ENCODE measurements at regions of chr12 and their contacts with region 1.

Region 1: DNA sequence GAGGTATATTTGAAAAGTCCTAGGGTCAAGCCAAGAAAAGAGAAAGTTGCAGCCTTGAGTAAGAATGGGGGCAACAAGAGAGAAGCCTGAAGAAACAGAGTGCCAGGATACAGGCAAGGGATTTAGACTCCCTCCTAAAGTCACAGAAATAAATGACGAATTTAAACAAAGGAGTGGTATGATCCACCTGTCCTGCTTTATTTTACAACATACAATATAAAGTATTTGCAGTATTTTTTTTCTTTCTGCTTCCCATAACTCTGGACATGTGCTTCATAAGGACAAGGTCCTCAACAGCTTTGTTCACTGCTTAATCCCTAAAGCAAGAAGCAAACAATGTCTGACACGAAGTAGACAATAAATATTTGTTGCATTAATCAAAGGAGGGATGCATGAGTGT is 57.4 kb downstream of the IFNG start:
- DNase-seq: peak in 1 of 2 experiments; percentile 16
- H3K4me3 ChIP-seq: no peak overlapping the region
- H3K4me3 Mint-ChIP-seq: no peak overlapping the region
- H3K27ac Mint-ChIP-seq: peak overlapping the region; percentile 45
- H3K4me1 ChIP-seq: peaks cover 11% of the 10 kb centered on the region
- H3K4me1 Mint-ChIP-seq: peaks cover 11% of the 10 kb centered on the region
- H3K27me3 ChIP-seq: no peaks in the 10 kb centered on the region
- H3K27me3 Mint-ChIP-seq: no peaks in the 10 kb centered on the region
- CTCF ChIP-seq: no peak

Region 2: DNA sequence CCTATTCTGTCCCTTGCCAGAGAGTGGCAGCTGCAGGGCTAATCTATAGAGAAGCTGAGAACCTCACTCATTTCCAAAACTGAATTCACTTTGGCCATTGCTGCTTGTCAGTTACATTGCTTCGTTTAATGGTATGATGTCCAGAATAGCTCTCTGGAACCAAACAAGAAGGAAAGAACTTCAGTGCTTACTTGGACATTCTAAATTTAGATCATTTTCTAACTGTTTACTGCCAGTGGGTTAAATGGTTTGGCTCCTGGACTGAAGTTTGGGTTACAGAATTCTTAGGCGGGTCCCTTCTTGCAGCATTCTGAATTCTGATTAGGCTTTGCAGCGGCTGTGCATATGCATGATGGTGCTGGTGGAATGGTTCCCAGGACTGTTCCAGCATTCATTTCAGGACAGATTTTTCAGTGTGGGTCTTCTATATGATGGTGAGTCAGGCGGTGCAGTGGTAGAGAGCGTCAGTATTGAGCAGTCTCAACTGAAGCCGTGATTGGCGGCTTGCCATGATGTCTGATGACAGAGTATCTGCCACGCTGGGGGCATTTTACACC is 304.9 kb before region 1 on chr12:
- CTCF ChIA-PET with region 1: no interaction called
- POLR2A ChIA-PET with region 1: no interaction called
- intact Hi-C with region 1: no loop called
- DNase-seq: no peak
- H3K4me3 ChIP-seq: no peak overlapping the region
- H3K4me3 Mint-ChIP-seq: no peak overlapping the region
- H3K27ac Mint-ChIP-seq: no peak overlapping the region
- H3K4me1 ChIP-seq: no peaks in the 10 kb centered on the region
- H3K4me1 Mint-ChIP-seq: peaks cover 5% of the 10 kb centered on the region
- H3K27me3 ChIP-seq: no peaks in the 10 kb centered on the region
- H3K27me3 Mint-ChIP-seq: no peaks in the 10 kb centered on the region
- CTCF ChIP-seq: no peak

Region 3: DNA sequence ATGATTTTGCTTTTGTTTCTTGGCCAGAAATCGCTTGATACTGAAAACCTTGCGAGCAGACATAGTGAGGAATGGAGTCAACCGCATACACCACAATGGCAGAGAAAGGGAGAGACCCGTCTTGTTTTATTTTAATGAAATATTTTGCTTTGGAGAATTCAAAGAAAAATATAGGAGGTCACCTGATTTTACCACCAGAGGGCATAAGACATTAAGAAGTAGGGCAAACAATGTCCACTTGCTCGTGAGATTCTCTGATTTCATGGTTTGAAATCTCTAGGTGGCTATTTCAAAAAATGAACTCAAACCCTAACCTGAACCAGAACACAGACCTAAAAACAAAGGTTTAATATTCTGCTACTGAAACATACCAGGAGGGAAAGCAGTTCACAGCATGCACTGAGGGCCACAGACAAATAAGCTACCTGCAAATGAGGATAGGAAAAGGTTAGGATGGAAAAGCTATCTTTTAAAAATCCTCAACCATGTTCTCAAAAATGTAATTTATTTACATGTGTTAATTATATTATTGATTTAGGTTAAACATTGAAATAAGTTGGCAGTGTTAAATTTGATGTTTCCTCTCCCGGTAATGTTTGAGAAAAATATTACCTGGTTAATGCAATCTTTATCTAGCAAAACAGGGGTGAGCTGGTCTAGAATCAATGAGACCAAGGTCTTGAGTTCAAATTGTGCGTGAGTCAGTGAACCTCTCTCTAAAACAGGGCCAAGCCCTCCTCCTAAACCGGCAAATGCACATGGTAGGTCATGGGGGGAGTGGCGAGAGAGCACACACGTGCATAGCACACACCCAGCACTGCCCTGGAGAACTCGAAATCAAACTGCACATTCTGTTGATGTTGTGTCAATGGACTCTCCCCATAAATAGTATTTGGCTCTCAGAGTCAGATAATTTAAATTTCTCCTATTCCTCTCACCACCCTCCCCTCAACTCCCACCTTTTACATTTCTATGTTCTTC is 100.4 kb before region 1 on chr12:
- CTCF ChIA-PET with region 1: no interaction called
- POLR2A ChIA-PET with region 1: no interaction called
- intact Hi-C with region 1: no loop called
- DNase-seq: peak in 1 of 2 experiments; percentile 7
- H3K4me3 ChIP-seq: no peak overlapping the region
- H3K4me3 Mint-ChIP-seq: no peak overlapping the region
- H3K27ac Mint-ChIP-seq: no peak overlapping the region
- H3K4me1 ChIP-seq: no peaks in the 10 kb centered on the region
- H3K4me1 Mint-ChIP-seq: no peaks in the 10 kb centered on the region
- H3K27me3 ChIP-seq: no peaks in the 10 kb centered on the region
- H3K27me3 Mint-ChIP-seq: no peaks in the 10 kb centered on the region
- CTCF ChIP-seq: peak; percentile 47 to 52

Region 4: GRCh38 chr12:68074306-68075027 is 27.7 kb before region 1 on chr12:
- CTCF ChIA-PET with region 1: no interaction called
- POLR2A ChIA-PET with region 1: no interaction called
- intact Hi-C with region 1: loop called (anchors 2 kb)
- DNase-seq: no peak
- H3K4me3 ChIP-seq: no peak overlapping the region
- H3K4me3 Mint-ChIP-seq: no peak overlapping the region
- H3K27ac Mint-ChIP-seq: peak overlapping the region; percentile 56
- H3K4me1 ChIP-seq: peaks cover 26% of the 10 kb centered on the region
- H3K4me1 Mint-ChIP-seq: peaks cover 23% of the 10 kb centered on the region
- H3K27me3 ChIP-seq: no peaks in the 10 kb centered on the region
- H3K27me3 Mint-ChIP-seq: no peaks in the 10 kb centered on the region
- CTCF ChIP-seq: no peak

Region 5: GRCh38 chr12:68207276-68207675 is 105.1 kb after region 1 on chr12:
- CTCF ChIA-PET with region 1: no interaction called
- POLR2A ChIA-PET with region 1: no interaction called
- intact Hi-C with region 1: no loop called
- DNase-seq: no peak
- H3K4me3 ChIP-seq: no peak overlapping the region
- H3K4me3 Mint-ChIP-seq: no peak overlapping the region
- H3K27ac Mint-ChIP-seq: no peak overlapping the region
- H3K4me1 ChIP-seq: no peaks in the 10 kb centered on the region
- H3K4me1 Mint-ChIP-seq: peaks cover 13% of the 10 kb centered on the region
- H3K27me3 ChIP-seq: no peaks in the 10 kb centered on the region
- H3K27me3 Mint-ChIP-seq: peaks cover 9% of the 10 kb centered on the region
- CTCF ChIP-seq: no peak

Region 6: DNA sequence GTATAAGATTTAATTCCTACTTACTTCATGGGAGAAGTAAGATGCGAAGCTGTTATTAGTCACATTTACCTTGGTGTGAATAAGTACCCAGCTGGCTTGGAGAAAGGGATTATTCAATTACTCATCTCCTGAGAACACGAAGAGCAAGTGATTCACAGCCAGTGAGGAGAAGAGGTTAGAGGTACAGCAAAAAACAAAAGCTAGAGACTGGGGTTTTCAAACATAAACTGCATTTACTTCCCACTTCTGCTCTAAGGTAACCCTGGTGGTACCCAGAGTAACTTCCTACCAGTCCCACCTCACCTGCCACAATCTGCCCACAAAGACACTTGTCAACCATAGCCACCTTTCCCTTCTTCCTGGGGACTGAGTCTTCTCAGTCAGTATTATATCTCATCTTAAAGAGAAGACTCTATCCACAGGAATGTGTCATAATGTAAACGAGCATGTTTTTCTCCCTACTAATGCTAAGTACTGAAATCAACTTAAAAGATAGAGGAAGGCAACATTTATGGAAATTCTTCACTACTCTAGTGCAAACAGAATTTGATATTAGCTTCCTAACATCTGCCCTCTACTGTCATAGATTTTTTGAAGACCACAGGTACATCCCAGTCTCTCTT is 157.3 kb after region 1 on chr12:
- CTCF ChIA-PET with region 1: no interaction called
- POLR2A ChIA-PET with region 1: no interaction called
- intact Hi-C with region 1: no loop called
- DNase-seq: no peak
- H3K4me3 ChIP-seq: no peak overlapping the region
- H3K4me3 Mint-ChIP-seq: no peak overlapping the region
- H3K27ac Mint-ChIP-seq: no peak overlapping the region
- H3K4me1 ChIP-seq: no peaks in the 10 kb centered on the region
- H3K4me1 Mint-ChIP-seq: no peaks in the 10 kb centered on the region
- H3K27me3 ChIP-seq: peaks cover 2% of the 10 kb centered on the region
- H3K27me3 Mint-ChIP-seq: peaks cover 23% of the 10 kb centered on the region
- CTCF ChIP-seq: no peak